ENCODE measurements at regions of chr2 and their contacts with region 1.

Region 1: GRCh38 chr2:53949457-53949856 is 21.3 kb downstream of the PSME4 start:
- DNase-seq: no peak

Region 2: DNA sequence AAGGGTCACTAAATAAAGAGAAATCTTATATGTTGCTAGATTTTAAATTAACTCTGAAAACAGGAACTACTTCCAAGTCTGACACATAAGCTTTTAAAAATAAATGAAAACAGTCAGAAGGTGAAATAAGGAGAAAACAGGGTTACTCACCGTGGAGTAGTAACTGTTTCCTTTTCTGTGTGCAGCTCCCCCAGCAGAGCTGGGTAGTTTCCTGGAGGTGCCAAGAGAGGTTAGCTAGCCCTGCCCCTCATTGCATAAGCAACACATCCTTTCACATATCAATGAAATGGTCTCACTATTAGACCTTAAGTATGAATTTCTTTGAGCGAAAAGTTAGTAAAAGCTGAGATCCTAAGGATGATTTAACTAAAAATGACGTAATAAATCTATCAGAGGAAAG is 35.7 kb before region 1 on chr2:
- in situ Hi-C with region 1: loop called (anchors 5 kb)
- DNase-seq: no peak

Region 3: GRCh38 chr2:54370405-54371104 is 421.1 kb after region 1 on chr2:
- in situ Hi-C with region 1: no loop called
- DNase-seq: peak; percentile 63

Measured in SK-MEL-5 (cell line).